Activated naive CD4-positive, alpha-beta T cell treated with anti-CD3 and anti-CD28 coated beads for 36 hours (primary cell): ENCODE measurements at regions of chrX and their contacts with region 1.

Region 1: GRCh38 chrX:77910108-77910840 is at the start of gene ATP7A:
- DNase-seq: peak; percentile 93
- H3K4me3 Mint-ChIP-seq: peak within 1 kb of the TSS; percentile 97
- H3K27ac Mint-ChIP-seq: peak within 1 kb of the TSS; percentile 96
- H3K4me1 Mint-ChIP-seq: peaks cover 12% of the 10 kb centered on the region
- H3K27me3 Mint-ChIP-seq: no peaks in the 10 kb centered on the region
- total RNA-seq, gene ATP7A: 5.3 to 5.5 TPM

Region 2: GRCh38 chrX:77814210-77814609 is 96.1 kb before region 1 on chrX:
- CTCF ChIA-PET with region 1: no interaction called
- intact Hi-C with region 1: no loop called
- DNase-seq: no peak
- H3K4me3 Mint-ChIP-seq: no peak overlapping the region
- H3K27ac Mint-ChIP-seq: no peak overlapping the region
- H3K4me1 Mint-ChIP-seq: peaks cover 3% of the 10 kb centered on the region
- H3K27me3 Mint-ChIP-seq: no peaks in the 10 kb centered on the region

Region 3: GRCh38 chrX:77962068-77962902 is 52.0 kb after region 1 on chrX:
- CTCF ChIA-PET with region 1: no interaction called
- intact Hi-C with region 1: loop called (anchors 1 kb)
- DNase-seq: peak; percentile 14
- H3K4me3 Mint-ChIP-seq: peak overlapping the region; percentile 75
- H3K27ac Mint-ChIP-seq: peak overlapping the region; percentile 93
- H3K4me1 Mint-ChIP-seq: peaks cover 44% of the 10 kb centered on the region
- H3K27me3 Mint-ChIP-seq: no peaks in the 10 kb centered on the region

Region 4: GRCh38 chrX:78066110-78066509 is 155.8 kb after region 1 on chrX:
- CTCF ChIA-PET with region 1: no interaction called
- intact Hi-C with region 1: loop called (anchors 1 kb)
- DNase-seq: no peak
- H3K4me3 Mint-ChIP-seq: no peak overlapping the region
- H3K27ac Mint-ChIP-seq: no peak overlapping the region
- H3K4me1 Mint-ChIP-seq: peaks cover 14% of the 10 kb centered on the region
- H3K27me3 Mint-ChIP-seq: no peaks in the 10 kb centered on the region

Region 5: GRCh38 chrX:78103623-78104446 is 193.6 kb after region 1 on chrX and contains the start of gene PGK1:
- CTCF ChIA-PET with region 1: no interaction called
- intact Hi-C with region 1: loop called (anchors 1 kb)
- DNase-seq: peak; percentile 95
- H3K4me3 Mint-ChIP-seq: peak within 1 kb of the TSS; percentile 95
- H3K27ac Mint-ChIP-seq: peak within 1 kb of the TSS; percentile 92
- H3K4me1 Mint-ChIP-seq: peaks cover 28% of the 10 kb centered on the region
- H3K27me3 Mint-ChIP-seq: no peaks in the 10 kb centered on the region
- total RNA-seq, gene PGK1: 744 to 766 TPM

Region 6: DNA sequence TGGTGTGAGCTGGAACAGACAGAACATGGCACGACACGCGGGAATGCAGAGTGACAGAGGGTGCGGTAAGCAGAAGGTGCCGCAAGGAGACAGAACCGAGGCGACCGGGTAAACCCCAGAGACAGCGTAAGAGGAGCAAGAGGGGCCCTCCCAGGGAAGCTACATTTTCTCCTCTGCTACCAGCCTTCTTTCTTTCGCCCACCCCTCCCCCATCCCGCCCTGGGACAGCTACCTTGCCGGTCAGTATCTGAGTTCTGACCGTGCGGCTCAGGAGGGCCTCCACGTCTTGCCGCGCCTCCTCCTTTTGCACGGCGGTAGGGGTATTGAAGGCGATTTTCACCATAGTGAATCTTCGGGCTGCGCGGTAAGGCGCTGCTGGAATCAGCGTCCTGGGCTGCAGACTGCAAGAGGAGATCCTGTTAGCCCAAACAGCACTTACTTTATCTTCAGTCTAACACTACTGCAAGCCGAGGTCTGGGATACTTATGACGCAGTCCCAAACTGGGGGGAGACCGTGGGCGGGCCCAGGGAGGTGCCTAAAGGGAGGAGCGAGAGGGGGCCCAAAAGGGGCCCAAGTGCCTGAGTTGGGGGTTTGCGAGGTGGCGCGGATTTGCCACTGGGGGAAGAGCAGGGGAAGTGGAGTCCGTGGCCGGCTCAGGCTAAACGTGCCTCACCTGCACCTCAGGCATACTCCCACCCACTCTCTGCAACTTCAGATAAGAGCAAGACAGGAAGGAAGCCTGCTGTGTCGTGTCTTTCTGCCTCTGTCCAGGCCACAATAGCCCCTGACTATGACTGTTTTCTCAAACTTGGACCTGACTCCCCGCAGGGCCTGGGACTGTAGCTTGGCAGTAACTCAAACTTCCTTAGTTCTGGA is 1456.8 kb after region 1 on chrX and contains the start of gene ITM2A:
- CTCF ChIA-PET with region 1: no interaction called
- intact Hi-C with region 1: loop called (anchors 10 kb)
- DNase-seq: peak; percentile 76
- H3K4me3 Mint-ChIP-seq: peak within 1 kb of the TSS; percentile 86
- H3K27ac Mint-ChIP-seq: peak within 1 kb of the TSS; percentile 93
- H3K4me1 Mint-ChIP-seq: peaks cover 39% of the 10 kb centered on the region
- H3K27me3 Mint-ChIP-seq: no peaks in the 10 kb centered on the region
- total RNA-seq, gene ITM2A: 99.5 to 116 TPM

Region 7: GRCh38 chrX:79452881-79453280 is 1542.6 kb after region 1 on chrX:
- CTCF ChIA-PET with region 1: no interaction called
- intact Hi-C with region 1: loop called (anchors 1 kb)
- DNase-seq: no peak
- H3K4me3 Mint-ChIP-seq: no peak overlapping the region
- H3K27ac Mint-ChIP-seq: no peak overlapping the region
- H3K4me1 Mint-ChIP-seq: no peaks in the 10 kb centered on the region
- H3K27me3 Mint-ChIP-seq: no peaks in the 10 kb centered on the region